ENCODE measurements at regions of chr19 and their contacts with region 1.

Region 1: GRCh38 chr19:51338563-51339312 is 3.2 kb downstream of the VSIG10L start:
- DNase-seq: peak; percentile 47 to 92
- H3K4me3 ChIP-seq: peak overlapping the region; percentile 57 to 85
- H3K27ac ChIP-seq: peak overlapping the region; percentile 92 to 93
- H3K4me1 ChIP-seq: peaks cover 0 to 4% of the 10 kb centered on the region in 2 donors
- H3K27me3 ChIP-seq: no peaks in the 10 kb centered on the region
- CTCF ChIP-seq: peak; percentile 83 to 97 (median 90)

Region 2: GRCh38 chr19:51356159-51356801 is 17.5 kb after region 1 on chr19:
- intact Hi-C with region 1: no loop called
- DNase-seq: no peak
- H3K4me3 ChIP-seq: no peak overlapping the region
- H3K27ac ChIP-seq: no peak overlapping the region
- H3K4me1 ChIP-seq: no peaks in the 10 kb centered on the region
- H3K27me3 ChIP-seq: no peaks in the 10 kb centered on the region
- CTCF ChIP-seq: no peak

Region 3: DNA sequence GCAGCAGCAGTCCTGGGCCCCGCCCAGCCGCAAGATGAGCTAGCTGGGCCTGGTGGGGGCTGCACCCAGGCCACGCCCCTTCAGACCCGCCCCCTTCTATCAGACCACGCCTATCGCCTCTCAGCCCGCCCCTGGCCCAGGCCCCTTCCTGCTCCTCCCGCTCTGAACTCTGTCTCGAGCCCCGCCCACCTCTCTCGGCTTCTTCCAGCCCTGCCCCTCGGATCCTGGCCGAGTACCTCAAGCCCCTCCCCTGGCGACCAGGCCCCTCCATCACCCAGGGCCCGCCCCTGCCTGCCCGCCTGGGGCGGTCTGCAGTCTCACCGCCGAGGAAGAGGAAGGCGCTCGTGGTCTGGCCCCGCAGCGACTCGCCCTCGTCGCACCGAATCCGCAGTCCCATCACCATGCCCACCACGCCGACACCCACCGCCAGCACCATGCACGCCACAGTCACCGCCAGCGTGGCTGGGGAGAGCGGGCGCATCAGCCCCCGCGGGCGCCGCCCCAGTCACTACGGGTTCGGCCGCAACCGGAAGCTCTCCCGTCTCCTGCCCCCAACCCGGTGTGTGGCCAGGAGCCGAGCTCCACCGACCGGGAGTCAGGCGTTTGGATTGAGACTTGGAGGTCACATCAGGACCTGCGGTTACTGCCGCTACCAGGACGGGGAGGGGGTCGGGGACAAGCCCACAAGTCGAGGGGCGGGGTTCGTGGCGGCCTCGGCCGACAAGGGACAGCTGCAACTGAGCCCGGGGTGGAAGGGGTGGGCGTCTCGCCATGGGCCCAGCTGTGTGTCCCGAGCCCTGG is 29.0 kb after region 1 on chr19:
- intact Hi-C with region 1: loop called (anchors 1 kb)
- DNase-seq: peak; percentile 95 to 100
- H3K4me3 ChIP-seq: peak overlapping the region; percentile 79 to 82
- H3K27ac ChIP-seq: peak overlapping the region; percentile 83 to 94
- H3K4me1 ChIP-seq: peaks cover 6 to 12% of the 10 kb centered on the region in 2 donors
- H3K27me3 ChIP-seq: no peaks in the 10 kb centered on the region
- CTCF ChIP-seq: no peak

Region 4: DNA sequence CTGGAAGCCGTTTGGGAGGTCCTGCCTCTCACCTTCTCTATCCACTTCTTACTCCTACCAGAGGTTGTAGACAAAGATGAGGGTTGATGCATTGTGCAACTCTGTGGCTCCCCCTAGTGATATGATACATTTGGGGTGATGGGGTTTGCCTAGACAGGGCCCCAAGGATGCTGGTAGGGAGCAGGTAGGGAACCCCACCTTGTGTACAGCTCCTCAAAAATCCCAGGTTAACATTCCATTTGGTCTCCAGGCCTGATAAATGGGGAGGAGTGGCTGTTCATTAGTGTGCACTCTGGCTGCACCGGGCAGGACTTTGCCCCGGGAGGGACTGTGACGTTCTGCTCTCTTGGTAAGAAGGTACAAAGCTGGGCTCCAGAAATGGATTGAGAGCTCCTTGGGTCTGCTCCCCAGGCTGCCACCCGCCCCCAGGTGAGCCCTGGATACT is 100.3 kb after region 1 on chr19:
- intact Hi-C with region 1: loop called (anchors 1 kb)
- DNase-seq: no peak
- H3K4me3 ChIP-seq: no peak overlapping the region
- H3K27ac ChIP-seq: no peak overlapping the region
- H3K4me1 ChIP-seq: no peaks in the 10 kb centered on the region
- H3K27me3 ChIP-seq: no peaks in the 10 kb centered on the region
- CTCF ChIP-seq: peak in 1 of 3 experiments; percentile 34

Region 5: GRCh38 chr19:51593969-51594773 is 255.4 kb after region 1 on chr19:
- intact Hi-C with region 1: loop called (anchors 2 kb)
- DNase-seq: peak; percentile 91 to 99
- H3K4me3 ChIP-seq: peak overlapping the region; percentile 71 to 84
- H3K27ac ChIP-seq: peak overlapping the region in 1 of 2 donors; percentile 58
- H3K4me1 ChIP-seq: peaks cover 10 to 11% of the 10 kb centered on the region in 2 donors
- H3K27me3 ChIP-seq: no peaks in the 10 kb centered on the region
- CTCF ChIP-seq: no peak

Region 6: DNA sequence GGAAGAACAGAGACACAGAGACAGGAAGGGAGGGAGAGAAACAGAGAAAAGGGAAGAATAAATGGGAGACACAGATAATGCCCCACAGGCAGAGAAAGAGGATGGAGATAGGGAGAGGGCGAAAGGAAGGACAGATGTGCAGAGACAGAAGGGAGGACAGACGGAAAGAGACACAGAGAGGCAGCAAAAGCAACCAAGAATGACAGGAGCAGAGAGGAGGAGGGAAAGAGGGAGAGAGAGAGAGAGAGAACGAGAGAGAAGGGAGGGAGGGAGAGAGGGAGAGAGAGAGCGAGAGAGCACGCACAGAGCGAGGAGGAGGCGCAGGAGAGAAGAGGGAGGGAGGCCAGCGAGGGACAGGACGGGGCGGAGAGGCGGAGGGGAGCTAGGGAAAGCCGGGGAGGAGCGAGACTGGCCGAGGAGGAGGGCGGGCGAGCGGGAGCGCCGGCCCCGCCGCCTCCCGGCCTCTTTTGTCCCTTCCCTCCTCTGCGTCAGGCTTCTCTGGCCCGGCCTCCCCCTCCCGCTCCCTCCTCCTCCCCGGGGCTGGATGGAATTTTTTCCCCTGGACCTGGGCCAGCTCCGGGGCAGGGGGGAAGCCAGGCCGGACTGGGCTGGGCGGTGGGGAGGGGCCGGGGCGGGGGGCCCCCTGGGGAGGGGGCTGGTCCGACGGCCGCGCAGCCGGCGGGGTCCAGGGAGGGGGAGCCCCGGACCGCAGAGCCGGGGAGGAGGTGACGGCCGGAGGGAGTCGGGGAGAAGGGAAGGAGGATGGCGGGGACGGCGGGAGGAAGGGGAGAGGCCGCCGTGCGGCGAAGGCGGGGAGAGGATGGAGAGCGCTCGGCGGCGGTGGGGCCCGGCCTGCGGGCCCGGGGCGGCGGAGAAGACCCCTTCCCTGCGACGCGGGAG is 350.2 kb after region 1 on chr19:
- intact Hi-C with region 1: loop called (anchors 1 kb)
- DNase-seq: peak in 1 of 2 donors; percentile 94
- H3K4me3 ChIP-seq: peak overlapping the region; percentile 71 to 89
- H3K27ac ChIP-seq: peak overlapping the region; percentile 97 to 100
- H3K4me1 ChIP-seq: peaks cover 12 to 21% of the 10 kb centered on the region in 2 donors
- H3K27me3 ChIP-seq: no peaks in the 10 kb centered on the region
- CTCF ChIP-seq: no peak

Region 7: GRCh38 chr19:51777570-51778462 is 439.1 kb after region 1 on chr19:
- intact Hi-C with region 1: loop called (anchors 2 kb)
- DNase-seq: peak in 1 of 2 donors; percentile 76
- H3K4me3 ChIP-seq: no peak overlapping the region
- H3K27ac ChIP-seq: no peak overlapping the region
- H3K4me1 ChIP-seq: no peaks in the 10 kb centered on the region
- H3K27me3 ChIP-seq: no peaks in the 10 kb centered on the region
- CTCF ChIP-seq: peak; percentile 56 to 75 (median 65)

Measured in ascending aorta (tissue), 2 donors.